ENCODE measurements at regions of chr2 and their contacts with region 1.

Region 1: DNA sequence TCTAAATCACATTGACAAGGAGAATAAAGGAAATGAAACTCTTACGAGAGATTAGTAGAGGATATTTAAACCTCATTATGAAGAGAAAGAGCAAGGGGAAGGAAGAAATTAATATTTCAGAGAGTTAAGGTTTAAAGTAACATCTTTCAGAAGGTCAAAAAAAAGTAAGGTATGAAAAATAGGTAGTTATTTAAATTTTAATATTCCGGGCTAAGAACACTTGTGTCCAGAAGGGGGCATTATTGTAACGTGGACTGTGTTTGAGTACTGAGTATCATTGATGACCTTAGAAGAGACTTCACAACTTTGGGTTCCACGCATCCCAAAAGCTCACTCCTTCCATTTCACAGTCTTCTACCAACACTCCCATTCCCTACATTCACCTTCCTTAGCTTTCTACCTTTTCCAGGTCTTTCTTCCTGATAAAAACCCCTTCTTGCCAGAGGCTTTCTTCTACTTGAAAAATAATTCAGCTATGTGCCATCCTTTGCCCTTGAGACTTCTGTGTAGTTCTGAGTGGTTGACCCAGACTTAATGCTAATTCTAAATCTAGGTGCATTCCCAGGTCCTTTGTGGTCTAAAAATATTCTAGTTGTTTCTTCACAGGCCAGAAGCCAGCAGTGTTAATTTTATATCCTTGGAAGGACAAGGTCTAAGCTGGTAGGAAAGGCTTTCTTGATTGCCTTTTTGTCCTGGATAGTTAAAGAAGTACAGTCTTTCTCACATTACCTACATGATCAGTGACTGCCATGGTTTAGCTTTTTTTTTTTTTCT is 16.5 kb downstream of the DYNC1I2 start:
- H3K4me3 Mint-ChIP-seq: no peak overlapping the region
- H3K27ac Mint-ChIP-seq: no peak overlapping the region
- H3K4me1 Mint-ChIP-seq: peaks cover 9% of the 10 kb centered on the region
- H3K27me3 Mint-ChIP-seq: no peaks in the 10 kb centered on the region

Region 2: GRCh38 chr2:171574149-171574795 is 129.5 kb before region 1 on chr2:
- intact Hi-C with region 1: loop called (anchors 10 kb)
- H3K4me3 Mint-ChIP-seq: no peak overlapping the region
- H3K27ac Mint-ChIP-seq: no peak overlapping the region
- H3K4me1 Mint-ChIP-seq: peaks cover 6% of the 10 kb centered on the region
- H3K27me3 Mint-ChIP-seq: no peaks in the 10 kb centered on the region

Measured in dendritic cell treated with granulocyte-macrophage colony-stimulating factor and Interleukin-4, amounts not matched to agents 40 ng/mL and 50 ng/mL, for 4 days (primary cell).